ENCODE measurements at regions of chr18 and their contacts with region 1.

Region 1: DNA sequence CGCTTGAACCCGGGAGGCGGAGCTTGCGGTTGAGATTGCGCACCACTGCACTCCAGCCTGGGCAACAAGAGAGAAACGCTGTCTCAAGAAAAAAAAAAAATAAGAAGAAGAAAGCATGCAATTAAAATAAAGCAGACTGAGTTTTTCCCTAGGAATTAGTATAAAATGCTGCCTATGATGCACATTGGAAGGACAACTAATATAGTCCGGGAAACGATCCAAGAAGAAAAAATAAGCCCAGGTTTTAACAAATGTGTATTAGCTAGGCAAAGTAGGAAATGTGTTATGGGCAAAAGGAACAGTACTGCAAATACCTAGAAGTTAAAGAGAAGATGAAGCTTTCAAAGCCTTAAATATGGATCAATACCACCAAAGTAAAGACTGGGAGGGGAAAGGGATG is 64.0 kb downstream of the SPIRE1 start:
- DNase-seq: no peak
- H3K4me3 ChIP-seq: no peak overlapping the region
- H3K4me3 Mint-ChIP-seq: no peak overlapping the region
- H3K27ac Mint-ChIP-seq: no peak overlapping the region
- H3K4me1 ChIP-seq: peaks cover 13% of the 10 kb centered on the region
- H3K4me1 Mint-ChIP-seq: peaks cover 13% of the 10 kb centered on the region
- H3K27me3 ChIP-seq: no peaks in the 10 kb centered on the region
- H3K27me3 Mint-ChIP-seq: no peaks in the 10 kb centered on the region
- CTCF ChIP-seq: no peak

Region 2: GRCh38 chr18:12531749-12532148 is 62.1 kb before region 1 on chr18:
- CTCF ChIA-PET with region 1: no interaction called
- POLR2A ChIA-PET with region 1: no interaction called
- intact Hi-C with region 1: no loop called
- DNase-seq: no peak
- H3K4me3 ChIP-seq: no peak overlapping the region
- H3K4me3 Mint-ChIP-seq: no peak overlapping the region
- H3K27ac Mint-ChIP-seq: no peak overlapping the region
- H3K4me1 ChIP-seq: no peaks in the 10 kb centered on the region
- H3K4me1 Mint-ChIP-seq: no peaks in the 10 kb centered on the region
- H3K27me3 ChIP-seq: no peaks in the 10 kb centered on the region
- H3K27me3 Mint-ChIP-seq: no peaks in the 10 kb centered on the region
- CTCF ChIP-seq: peak in 1 of 2 experiments; percentile 9

Region 3: DNA sequence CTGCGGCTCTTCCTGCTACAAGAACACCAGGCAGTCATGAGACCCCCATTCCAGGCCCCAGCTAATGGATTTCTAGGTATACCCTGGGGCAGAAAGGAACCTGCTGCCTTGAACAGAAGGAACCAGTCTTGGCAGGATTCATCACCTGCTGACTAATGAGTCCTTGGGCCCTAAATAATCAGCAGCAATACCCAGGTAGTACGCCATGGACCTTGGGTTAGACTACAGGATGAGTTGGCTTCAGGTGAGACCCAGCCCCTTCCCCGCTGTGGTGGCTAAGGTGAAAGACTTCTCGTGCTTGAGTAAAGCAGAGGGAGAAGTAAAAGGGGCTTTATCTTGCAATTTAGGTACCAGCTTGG is 41.0 kb before region 1 on chr18:
- CTCF ChIA-PET with region 1: no interaction called
- POLR2A ChIA-PET with region 1: no interaction called
- intact Hi-C with region 1: no loop called
- DNase-seq: no peak
- H3K4me3 ChIP-seq: no peak overlapping the region
- H3K4me3 Mint-ChIP-seq: no peak overlapping the region
- H3K27ac Mint-ChIP-seq: no peak overlapping the region
- H3K4me1 ChIP-seq: no peaks in the 10 kb centered on the region
- H3K4me1 Mint-ChIP-seq: no peaks in the 10 kb centered on the region
- H3K27me3 ChIP-seq: no peaks in the 10 kb centered on the region
- H3K27me3 Mint-ChIP-seq: no peaks in the 10 kb centered on the region
- CTCF ChIP-seq: no peak

Region 4: DNA sequence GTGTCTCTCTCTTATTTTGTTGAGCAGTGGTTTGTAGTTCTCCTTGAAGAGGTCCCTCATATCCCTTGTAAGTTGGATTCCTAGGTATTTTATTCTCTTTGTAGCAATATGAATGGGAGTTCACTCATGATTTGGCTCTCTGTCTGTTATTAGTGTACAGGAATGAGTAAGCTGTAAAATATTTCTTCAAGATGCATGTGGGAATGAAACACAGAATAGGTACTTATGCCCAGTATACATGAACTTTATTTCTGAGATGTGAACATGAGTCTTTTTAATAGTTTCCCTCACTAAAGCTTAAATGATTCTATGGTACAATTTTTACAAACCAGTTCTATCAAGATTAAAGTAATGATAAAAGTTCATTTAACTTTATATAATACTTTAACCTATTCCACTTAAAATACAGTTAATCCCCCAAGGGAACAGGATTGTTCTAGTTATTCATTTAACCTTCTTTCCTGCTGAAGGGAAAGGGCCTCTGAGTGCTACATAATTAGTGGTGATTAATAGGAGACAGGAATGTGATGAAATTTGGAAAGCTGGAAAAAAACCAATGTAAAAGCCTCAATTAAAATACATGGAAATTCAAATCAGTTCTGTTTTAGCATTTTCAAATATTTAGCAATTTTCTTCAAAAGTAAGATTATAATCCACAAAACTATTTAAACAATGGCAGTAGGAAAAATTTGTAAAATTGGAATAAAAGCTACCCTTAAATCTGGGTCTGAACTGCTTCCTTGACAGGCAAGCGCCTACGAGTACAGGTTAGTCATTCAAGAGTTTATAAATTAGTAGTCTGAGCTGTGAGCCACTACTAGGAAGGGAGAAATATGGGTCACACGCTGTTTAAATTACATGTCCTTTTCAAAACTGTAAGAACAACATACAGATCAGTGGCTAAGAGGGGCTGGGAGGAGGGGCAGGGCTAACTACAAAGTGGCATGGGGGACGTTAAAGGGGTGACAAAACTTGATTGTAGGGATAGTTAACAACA is 35.1 kb after region 1 on chr18:
- CTCF ChIA-PET with region 1: no interaction called
- POLR2A ChIA-PET with region 1: no interaction called
- intact Hi-C with region 1: loop called (anchors 5 kb)
- DNase-seq: no peak
- H3K4me3 ChIP-seq: no peak overlapping the region
- H3K4me3 Mint-ChIP-seq: no peak overlapping the region
- H3K27ac Mint-ChIP-seq: no peak overlapping the region
- H3K4me1 ChIP-seq: no peaks in the 10 kb centered on the region
- H3K4me1 Mint-ChIP-seq: no peaks in the 10 kb centered on the region
- H3K27me3 ChIP-seq: no peaks in the 10 kb centered on the region; the same call in 1 of the 2 replicates
- H3K27me3 Mint-ChIP-seq: no peaks in the 10 kb centered on the region
- CTCF ChIP-seq: no peak